ENCODE measurements at regions of chr5 and their contacts with region 1.

Region 1: GRCh38 chr5:151080623-151081430 is at the start of gene TNIP1:
- DNase-seq: peak; percentile 86 to 97 (median 92)
- ATAC-seq: peak; percentile 78
- H3K4me3 ChIP-seq: peak within 1 kb of the TSS; percentile 85
- H3K4me3 Mint-ChIP-seq: peak within 1 kb of the TSS; percentile 97
- H3K27ac ChIP-seq: peak within 1 kb of the TSS; percentile 97
- H3K27ac Mint-ChIP-seq: peak within 1 kb of the TSS; percentile 87
- H3K4me1 ChIP-seq: peaks cover 88% of the 10 kb centered on the region
- H3K4me1 Mint-ChIP-seq: peaks cover 89% of the 10 kb centered on the region
- H3K27me3 ChIP-seq: no peaks in the 10 kb centered on the region
- H3K27me3 Mint-ChIP-seq: no peaks in the 10 kb centered on the region
- CTCF ChIP-seq: no peak
- total RNA-seq, gene TNIP1: 110 to 115 TPM

Region 2: DNA sequence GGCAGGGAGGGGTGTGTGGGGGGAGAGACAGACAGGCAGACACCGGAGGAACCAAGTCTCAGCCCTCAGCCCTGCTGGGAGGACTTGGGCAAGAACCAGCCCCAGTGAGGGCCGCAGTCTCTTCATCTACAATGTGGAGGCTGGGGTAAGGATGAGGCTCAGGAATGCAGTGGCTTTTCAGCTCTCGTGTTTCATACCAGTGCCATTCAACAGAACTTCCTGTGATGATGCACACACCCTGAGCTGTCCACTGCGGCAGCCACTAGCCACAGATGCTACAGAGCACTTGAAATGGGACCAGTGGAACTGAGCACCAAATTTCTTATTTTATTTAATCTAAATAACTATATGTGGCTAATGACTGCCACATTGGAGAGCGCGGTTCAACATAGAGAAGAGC is 801.9 kb before region 1 on chr5:
- CTCF ChIA-PET with region 1: no interaction called
- POLR2A ChIA-PET with region 1: no interaction called
- intact Hi-C with region 1: no loop called
- DNase-seq: no peak
- ATAC-seq: no peak
- H3K4me3 ChIP-seq: no peak overlapping the region
- H3K4me3 Mint-ChIP-seq: no peak overlapping the region
- H3K27ac ChIP-seq: no peak overlapping the region
- H3K27ac Mint-ChIP-seq: no peak overlapping the region
- H3K4me1 ChIP-seq: no peaks in the 10 kb centered on the region
- H3K4me1 Mint-ChIP-seq: no peaks in the 10 kb centered on the region
- H3K27me3 ChIP-seq: no peaks in the 10 kb centered on the region
- H3K27me3 Mint-ChIP-seq: peaks cover 18% of the 10 kb centered on the region
- CTCF ChIP-seq: no peak

Region 3: DNA sequence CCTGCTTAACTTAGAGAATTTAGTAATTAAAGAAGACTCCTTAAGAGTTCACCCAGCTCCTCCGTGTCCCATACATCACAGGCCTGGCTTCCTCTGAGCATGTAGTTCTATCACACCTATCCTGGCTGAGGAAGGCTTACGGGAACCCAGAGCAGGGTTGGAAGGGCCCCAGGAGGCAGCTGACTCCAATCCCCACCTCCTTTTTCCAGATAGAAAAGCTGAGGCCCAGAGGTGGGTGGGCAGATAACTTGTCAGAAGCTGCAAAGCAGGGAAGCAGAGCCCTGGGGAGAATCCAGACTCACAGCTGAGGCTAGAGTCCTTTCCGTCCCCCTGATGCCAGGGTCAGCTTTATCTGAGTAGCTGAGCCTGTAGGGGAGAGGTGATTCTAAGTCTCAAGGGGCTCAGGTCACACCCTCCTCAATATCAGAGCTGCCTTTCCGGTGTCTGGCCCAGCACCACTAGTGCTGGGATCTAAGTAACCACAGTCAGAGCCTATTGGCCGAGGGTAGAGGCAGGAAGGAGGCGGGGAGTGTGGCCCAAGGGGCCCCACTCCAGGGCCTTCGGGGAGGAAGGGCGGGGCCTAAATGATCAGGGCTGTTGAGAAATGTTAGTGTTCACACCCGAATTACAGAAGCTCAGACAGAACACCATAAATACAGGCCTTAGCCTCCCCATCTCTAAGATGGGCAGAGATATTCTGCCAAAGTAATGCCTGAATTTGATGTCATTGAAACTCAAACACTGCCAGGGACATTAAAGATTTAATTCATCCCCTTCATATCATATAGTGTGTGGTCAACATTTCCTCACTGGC is 133.2 kb after region 1 on chr5:
- CTCF ChIA-PET with region 1: interaction called, 3 read pairs
- POLR2A ChIA-PET with region 1: interaction called, 4 read pairs
- intact Hi-C with region 1: loop called in 1 of 2 experiments (anchors 5 kb)
- DNase-seq: peak; percentile 66 to 94 (median 86)
- ATAC-seq: peak; percentile 81
- H3K4me3 ChIP-seq: peak overlapping the region; percentile 55
- H3K4me3 Mint-ChIP-seq: peak overlapping the region; percentile 89
- H3K27ac ChIP-seq: peak overlapping the region; percentile 92 to 97
- H3K27ac Mint-ChIP-seq: peak overlapping the region; percentile 94
- H3K4me1 ChIP-seq: peaks cover 99% of the 10 kb centered on the region
- H3K4me1 Mint-ChIP-seq: peaks cover 94% of the 10 kb centered on the region
- H3K27me3 ChIP-seq: no peaks in the 10 kb centered on the region
- H3K27me3 Mint-ChIP-seq: no peaks in the 10 kb centered on the region
- CTCF ChIP-seq: no peak

Region 4: DNA sequence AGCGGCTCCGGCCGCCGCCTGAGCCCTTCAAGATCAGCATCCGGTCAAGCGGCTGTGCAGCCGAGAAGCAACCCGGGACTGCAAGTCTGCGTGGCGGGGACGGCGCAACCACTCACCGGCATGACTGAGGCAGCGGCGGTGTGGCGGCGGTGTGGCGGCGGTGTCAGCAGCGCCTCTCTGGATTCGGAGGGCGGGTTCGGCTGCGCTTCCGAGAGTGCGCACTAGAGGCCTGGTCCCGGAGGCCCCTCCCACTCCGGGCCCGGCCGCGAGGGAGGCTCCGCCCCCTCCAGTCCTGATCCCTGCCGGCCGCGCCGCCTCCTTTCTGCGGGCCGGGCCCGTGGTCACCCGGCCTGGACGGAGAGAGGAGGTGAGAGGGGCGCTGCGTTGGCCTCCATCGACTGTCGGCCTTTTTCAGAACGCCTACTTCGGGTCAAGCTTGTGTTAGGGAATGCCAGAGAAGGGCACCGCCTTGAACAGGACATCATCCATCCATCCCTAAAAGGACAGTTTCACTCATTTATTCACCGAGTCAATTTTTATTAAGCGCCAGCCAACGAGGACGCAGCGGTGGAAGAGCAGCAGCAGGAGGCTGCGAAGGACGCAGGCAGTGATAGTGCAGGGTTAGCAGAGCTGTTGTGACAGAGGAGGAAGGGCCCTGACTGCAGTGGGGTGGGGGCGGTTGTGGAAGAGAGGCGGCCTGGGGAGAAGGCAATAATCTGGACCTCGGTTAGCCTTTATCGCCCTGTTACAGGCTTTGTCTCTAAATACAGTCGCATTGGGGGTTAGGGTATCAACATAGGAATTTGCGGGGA is 677.8 kb after region 1 on chr5 and contains the start of gene ATOX1:
- CTCF ChIA-PET with region 1: no interaction called
- POLR2A ChIA-PET with region 1: no interaction called
- intact Hi-C with region 1: loop called in 1 of 2 experiments (anchors 10 kb)
- DNase-seq: peak; percentile 84 to 96 (median 89)
- ATAC-seq: peak; percentile 98
- H3K4me3 ChIP-seq: peak within 1 kb of the TSS; percentile 95
- H3K4me3 Mint-ChIP-seq: peak within 1 kb of the TSS; percentile 97
- H3K27ac ChIP-seq: peak within 1 kb of the TSS; percentile 55 to 68
- H3K27ac Mint-ChIP-seq: peak within 1 kb of the TSS; percentile 95
- H3K4me1 ChIP-seq: peaks cover 39% of the 10 kb centered on the region
- H3K4me1 Mint-ChIP-seq: peaks cover 47% of the 10 kb centered on the region
- H3K27me3 ChIP-seq: no peaks in the 10 kb centered on the region
- H3K27me3 Mint-ChIP-seq: no peaks in the 10 kb centered on the region
- CTCF ChIP-seq: no peak
- total RNA-seq, gene ATOX1: 11.2 to 13.3 TPM